Aorta (tissue), 5 donors: ENCODE measurements at regions of chr14 and their contacts with region 1.

Region 1: GRCh38 chr14:34794941-34795340 is 80.2 kb downstream of the BAZ1A start:
- DNase-seq: no peak
- ATAC-seq: no peak
- H3K4me3 ChIP-seq: no peak overlapping the region
- H3K27ac ChIP-seq: no peak overlapping the region
- H3K4me1 ChIP-seq: no peaks in the 10 kb centered on the region
- H3K27me3 ChIP-seq: no peaks in the 10 kb centered on the region

Region 2: DNA sequence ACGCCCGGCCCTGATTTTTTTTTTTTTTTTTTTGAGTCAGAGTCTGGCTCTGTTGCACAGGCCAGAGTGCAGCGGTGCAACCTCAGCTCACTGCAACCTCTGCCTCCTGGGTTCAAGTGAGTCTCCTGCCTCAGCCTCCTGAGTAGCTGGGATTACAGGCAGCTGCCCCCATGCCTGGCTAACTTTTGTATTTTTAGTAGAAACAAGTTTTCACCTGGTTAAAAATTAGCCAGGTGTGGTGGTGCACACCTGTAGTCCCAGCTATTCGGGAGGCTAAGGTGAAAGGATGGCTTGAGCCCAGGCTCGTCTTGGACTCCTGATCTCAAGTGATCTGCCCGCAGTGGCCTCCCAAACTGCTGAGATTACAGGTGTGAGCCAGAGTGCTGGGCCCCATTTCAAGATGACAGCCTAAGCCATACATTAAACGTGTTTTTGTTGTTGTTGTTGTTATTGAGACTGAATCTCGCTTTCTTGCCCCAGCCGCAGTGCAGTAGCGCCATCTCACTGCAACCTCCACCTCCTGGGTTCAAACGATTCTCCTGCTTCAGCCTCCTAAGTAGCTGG is 212.7 kb before region 1 on chr14:
- intact Hi-C with region 1: no loop called
- DNase-seq: peak; percentile 17 to 37
- ATAC-seq: no peak
- H3K4me3 ChIP-seq: no peak overlapping the region
- H3K27ac ChIP-seq: no peak overlapping the region
- H3K4me1 ChIP-seq: no peaks in the 10 kb centered on the region
- H3K27me3 ChIP-seq: no peaks in the 10 kb centered on the region

Region 3: DNA sequence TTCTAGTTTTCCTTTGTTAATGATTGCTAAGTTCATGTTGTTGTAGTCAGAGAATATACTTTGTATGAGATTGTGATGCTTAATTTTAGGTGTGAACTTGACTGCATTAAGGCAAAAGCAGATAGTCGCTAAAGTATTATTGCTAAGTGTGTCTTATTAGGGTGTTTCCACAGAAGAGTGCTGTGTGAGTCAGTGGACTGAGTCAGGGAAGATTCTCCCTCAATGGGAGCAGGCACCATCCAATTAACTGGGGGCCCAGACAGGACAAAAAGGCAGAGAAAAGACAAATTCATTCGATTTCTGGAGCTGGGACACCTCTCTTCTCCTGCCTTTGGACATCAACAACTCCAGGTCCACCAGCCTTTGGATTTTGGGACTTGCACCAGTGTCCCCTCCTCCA is 31.7 kb after region 1 on chr14:
- intact Hi-C with region 1: loop called in 1 of 2 experiments (anchors 1 kb)
- DNase-seq: no peak
- ATAC-seq: no peak
- H3K4me3 ChIP-seq: no peak overlapping the region
- H3K27ac ChIP-seq: no peak overlapping the region
- H3K4me1 ChIP-seq: no peaks in the 10 kb centered on the region
- H3K27me3 ChIP-seq: no peaks in the 10 kb centered on the region